ENCODE measurements at regions of chr17 and their contacts with region 1.

Region 1: DNA sequence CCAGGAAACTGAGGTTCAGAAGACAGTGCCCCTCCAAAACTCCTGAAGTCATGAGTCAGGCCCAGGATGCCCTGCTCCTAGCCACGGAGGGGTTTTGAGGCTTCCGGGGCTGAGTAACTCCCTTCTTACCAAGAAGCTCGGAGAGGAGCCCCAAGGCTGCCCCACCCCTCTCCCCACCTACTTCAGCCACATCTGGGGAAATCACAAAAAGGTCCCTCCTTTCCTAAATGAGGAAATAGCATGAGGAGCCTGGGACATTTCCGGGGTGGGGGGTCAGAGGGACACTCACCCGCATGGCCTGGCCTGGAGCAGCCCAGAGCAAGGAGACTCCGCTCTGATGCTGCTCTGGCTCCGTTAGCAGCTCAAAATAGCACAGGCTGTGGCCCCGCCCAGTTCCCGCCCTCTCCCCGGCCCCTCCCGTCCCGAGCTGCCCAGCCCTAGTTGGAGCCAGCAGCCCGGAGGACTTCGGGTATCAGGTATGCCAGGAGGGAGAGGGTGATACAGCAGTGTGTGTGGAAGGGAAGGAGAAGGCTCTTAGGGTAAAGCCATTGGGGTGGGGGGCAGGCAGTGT is 40.1 kb downstream of the MYO18A start:
- DNase-seq: peak; percentile 82
- H3K4me3 Mint-ChIP-seq: peak overlapping the region; percentile 96
- H3K27ac Mint-ChIP-seq: peak overlapping the region; percentile 100
- H3K4me1 Mint-ChIP-seq: peaks cover 80% of the 10 kb centered on the region
- H3K27me3 Mint-ChIP-seq: no peaks in the 10 kb centered on the region

Region 2: GRCh38 chr17:29155227-29155965 is 15.3 kb after region 1 on chr17:
- intact Hi-C with region 1: loop called (anchors 1 kb)
- DNase-seq: peak; percentile 51
- H3K4me3 Mint-ChIP-seq: peak overlapping the region; percentile 63
- H3K27ac Mint-ChIP-seq: peak overlapping the region; percentile 87
- H3K4me1 Mint-ChIP-seq: peaks cover 60% of the 10 kb centered on the region
- H3K27me3 Mint-ChIP-seq: no peaks in the 10 kb centered on the region

Region 3: GRCh38 chr17:29195465-29196081 is 55.4 kb after region 1 on chr17:
- intact Hi-C with region 1: no loop called
- DNase-seq: no peak
- H3K4me3 Mint-ChIP-seq: no peak overlapping the region
- H3K27ac Mint-ChIP-seq: no peak overlapping the region
- H3K4me1 Mint-ChIP-seq: no peaks in the 10 kb centered on the region
- H3K27me3 Mint-ChIP-seq: peaks cover 13% of the 10 kb centered on the region

Region 4: DNA sequence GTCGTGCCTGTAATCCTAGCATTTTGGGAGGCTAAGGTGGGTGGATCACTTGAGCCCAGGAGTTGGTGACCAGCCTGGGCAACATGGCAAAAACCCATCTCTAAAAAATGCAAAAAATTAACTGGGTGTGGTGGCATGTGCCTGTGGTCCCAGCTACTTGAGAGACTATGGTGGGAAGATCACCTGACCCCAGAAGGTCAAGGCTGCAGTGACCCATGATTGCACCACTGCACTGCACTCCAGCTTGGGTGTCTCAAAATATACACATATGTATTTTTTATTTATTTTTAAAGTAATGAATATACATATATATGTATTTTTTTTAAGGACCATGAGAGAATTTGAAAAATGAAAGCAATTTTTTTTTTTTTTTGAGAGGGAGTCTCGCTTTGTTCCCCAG is 158.9 kb after region 1 on chr17:
- intact Hi-C with region 1: no loop called
- DNase-seq: no peak
- H3K4me3 Mint-ChIP-seq: no peak overlapping the region
- H3K27ac Mint-ChIP-seq: no peak overlapping the region
- H3K4me1 Mint-ChIP-seq: peaks cover 13% of the 10 kb centered on the region
- H3K27me3 Mint-ChIP-seq: no peaks in the 10 kb centered on the region

Region 5: GRCh38 chr17:29347831-29348629 is 207.9 kb after region 1 on chr17:
- intact Hi-C with region 1: no loop called
- DNase-seq: no peak
- H3K4me3 Mint-ChIP-seq: no peak overlapping the region
- H3K27ac Mint-ChIP-seq: no peak overlapping the region
- H3K4me1 Mint-ChIP-seq: no peaks in the 10 kb centered on the region
- H3K27me3 Mint-ChIP-seq: peaks cover 10% of the 10 kb centered on the region

Region 6: DNA sequence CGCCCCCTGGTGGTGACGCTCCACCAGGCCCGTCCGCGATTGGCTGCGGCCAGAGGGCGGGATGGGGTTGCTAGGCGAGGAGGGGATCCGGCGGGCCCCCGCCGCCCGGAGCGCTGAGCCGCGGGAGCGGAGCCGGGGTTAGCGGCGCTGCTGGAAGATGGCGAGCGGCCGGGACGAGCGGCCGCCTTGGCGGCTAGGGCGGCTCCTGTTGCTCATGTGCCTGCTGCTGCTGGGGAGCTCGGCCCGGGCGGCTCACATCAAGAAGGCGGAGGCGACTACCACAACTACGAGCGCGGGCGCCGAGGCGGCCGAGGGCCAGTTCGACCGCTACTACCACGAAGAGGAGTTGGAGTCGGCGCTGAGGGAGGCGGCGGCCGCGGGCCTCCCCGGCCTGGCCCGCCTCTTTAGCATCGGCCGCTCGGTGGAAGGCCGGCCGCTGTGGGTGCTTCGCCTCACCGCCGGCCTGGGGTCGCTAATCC is 1238.7 kb after region 1 on chr17 and contains the start of gene CPD:
- intact Hi-C with region 1: no loop called
- DNase-seq: peak; percentile 97
- H3K4me3 Mint-ChIP-seq: peak within 1 kb of the TSS; percentile 92
- H3K27ac Mint-ChIP-seq: peak within 1 kb of the TSS; percentile 97
- H3K4me1 Mint-ChIP-seq: peaks cover 67% of the 10 kb centered on the region
- H3K27me3 Mint-ChIP-seq: no peaks in the 10 kb centered on the region
- total RNA-seq, gene CPD: 29.7 and 35.3 TPM in 2 replicates

Measured in activated T-helper 1 cell treated with anti-CD3 and anti-CD28 coated beads, Interleukin-12 subunit alpha, Interleukin-12 subunit beta, Interleukin-2, Interleukin-4 antibody, amounts not matched to agents 30 ng/mL and 10 ng/mL and 1 ng/mL, durations not matched to agents 14 hours and 24 hours and 36 hours (primary cell).